Activated CD4-positive, alpha-beta memory T cell treated with anti-CD3 and anti-CD28 coated beads for 36 hours (primary cell): ENCODE measurements at regions of chr14 and their contacts with region 1.

Region 1: GRCh38 chr14:75293920-75294642 is 15.5 kb downstream of the FOS start:
- DNase-seq: peak; percentile 96
- H3K4me3 Mint-ChIP-seq: peak overlapping the region; percentile 79
- H3K27ac Mint-ChIP-seq: peak overlapping the region; percentile 67
- H3K4me1 Mint-ChIP-seq: peaks cover 20% of the 10 kb centered on the region
- H3K27me3 Mint-ChIP-seq: no peaks in the 10 kb centered on the region

Region 2: GRCh38 chr14:75002392-75003249 is 291.5 kb before region 1 on chr14 and contains the start of gene EIF2B2:
- CTCF ChIA-PET with region 1: no interaction called
- POLR2A ChIA-PET with region 1: no interaction called
- intact Hi-C with region 1: loop called (anchors 5 kb)
- DNase-seq: peak; percentile 100
- H3K4me3 Mint-ChIP-seq: peak within 1 kb of the TSS; percentile 98
- H3K27ac Mint-ChIP-seq: peak within 1 kb of the TSS; percentile 79
- H3K4me1 Mint-ChIP-seq: peaks cover 34% of the 10 kb centered on the region
- H3K27me3 Mint-ChIP-seq: no peaks in the 10 kb centered on the region
- total RNA-seq, gene EIF2B2: 61.9 to 62.6 TPM

Region 3: DNA sequence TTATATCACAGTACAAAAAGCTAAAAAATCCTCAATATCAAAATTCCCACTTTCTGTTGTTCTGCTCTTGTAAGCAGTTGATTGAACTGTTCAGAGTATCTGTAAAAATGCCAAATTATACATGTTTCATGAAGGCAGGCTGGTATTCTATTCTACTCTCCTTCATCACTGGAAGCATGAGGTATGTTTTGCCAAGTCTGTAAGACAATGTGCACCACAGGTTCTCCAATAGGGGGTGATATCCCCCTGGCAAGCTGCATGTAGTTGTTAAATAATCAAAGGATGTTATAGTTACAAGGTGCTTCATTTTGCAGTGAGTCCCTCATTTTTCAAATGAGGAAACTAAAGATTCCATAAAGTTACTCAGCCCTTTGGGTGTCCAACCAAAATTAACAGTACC is 152.1 kb before region 1 on chr14:
- CTCF ChIA-PET with region 1: interaction called, 118 read pairs
- POLR2A ChIA-PET with region 1: interaction called, 3 read pairs
- intact Hi-C with region 1: no loop called
- DNase-seq: no peak
- H3K4me3 Mint-ChIP-seq: no peak overlapping the region
- H3K27ac Mint-ChIP-seq: no peak overlapping the region
- H3K4me1 Mint-ChIP-seq: peaks cover 58% of the 10 kb centered on the region
- H3K27me3 Mint-ChIP-seq: no peaks in the 10 kb centered on the region

Region 4: DNA sequence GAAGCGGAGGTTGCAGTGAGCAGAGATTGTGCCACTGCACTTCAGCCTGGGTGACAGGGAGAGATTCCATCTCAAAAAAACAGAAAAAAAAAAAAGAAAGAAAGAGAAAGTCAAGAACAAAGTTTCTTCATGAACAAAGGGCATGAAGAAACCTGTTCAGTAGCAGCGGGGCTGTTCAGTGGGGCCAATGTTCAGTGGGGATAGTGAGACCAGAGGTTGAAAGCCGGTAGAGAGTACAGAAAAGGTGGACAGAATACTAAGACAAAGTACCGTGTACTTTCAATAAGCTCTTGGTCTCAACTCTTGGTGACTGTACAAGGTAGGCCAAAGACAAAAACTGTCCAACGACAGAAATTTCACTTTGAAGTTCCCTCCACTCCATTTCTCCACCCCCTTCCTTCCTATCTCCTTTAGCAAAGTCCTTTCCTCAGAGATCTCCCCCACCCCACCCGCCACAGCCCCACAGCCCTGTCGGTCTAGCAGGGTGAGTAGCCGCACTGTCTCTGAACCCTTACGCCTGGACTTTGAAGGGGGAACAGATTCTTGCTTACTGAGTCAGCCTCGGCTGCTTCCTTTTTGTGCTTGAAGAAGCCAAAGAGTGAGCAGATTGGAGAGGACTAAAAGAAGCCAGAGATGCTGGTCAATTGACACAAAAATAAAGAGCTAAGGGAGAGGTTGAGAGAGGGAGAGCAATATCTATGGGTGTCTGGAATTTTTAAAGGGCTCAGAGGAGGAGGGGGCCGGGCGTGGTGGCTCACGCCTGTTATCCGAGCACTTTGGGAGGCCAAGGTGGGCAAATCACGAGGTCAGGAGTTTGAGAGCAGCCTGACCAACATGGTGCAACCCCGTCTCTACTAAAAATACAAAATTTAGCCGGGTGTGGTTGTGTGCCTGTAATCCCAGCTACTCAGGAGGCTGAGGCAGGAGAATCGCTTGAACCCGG is 59.6 kb before region 1 on chr14:
- CTCF ChIA-PET with region 1: no interaction called
- POLR2A ChIA-PET with region 1: no interaction called
- intact Hi-C with region 1: no loop called
- DNase-seq: no peak
- H3K4me3 Mint-ChIP-seq: no peak overlapping the region
- H3K27ac Mint-ChIP-seq: no peak overlapping the region
- H3K4me1 Mint-ChIP-seq: peaks cover 29% of the 10 kb centered on the region
- H3K27me3 Mint-ChIP-seq: no peaks in the 10 kb centered on the region

Region 5: GRCh38 chr14:75249251-75249957 is 44.7 kb before region 1 on chr14:
- CTCF ChIA-PET with region 1: interaction called, 31 read pairs
- POLR2A ChIA-PET with region 1: no interaction called
- intact Hi-C with region 1: loop called (anchors 1 kb)
- DNase-seq: peak; percentile 93
- H3K4me3 Mint-ChIP-seq: peak overlapping the region; percentile 33
- H3K27ac Mint-ChIP-seq: peak overlapping the region; percentile 64
- H3K4me1 Mint-ChIP-seq: peaks cover 55% of the 10 kb centered on the region
- H3K27me3 Mint-ChIP-seq: peaks cover 4% of the 10 kb centered on the region

Region 6: DNA sequence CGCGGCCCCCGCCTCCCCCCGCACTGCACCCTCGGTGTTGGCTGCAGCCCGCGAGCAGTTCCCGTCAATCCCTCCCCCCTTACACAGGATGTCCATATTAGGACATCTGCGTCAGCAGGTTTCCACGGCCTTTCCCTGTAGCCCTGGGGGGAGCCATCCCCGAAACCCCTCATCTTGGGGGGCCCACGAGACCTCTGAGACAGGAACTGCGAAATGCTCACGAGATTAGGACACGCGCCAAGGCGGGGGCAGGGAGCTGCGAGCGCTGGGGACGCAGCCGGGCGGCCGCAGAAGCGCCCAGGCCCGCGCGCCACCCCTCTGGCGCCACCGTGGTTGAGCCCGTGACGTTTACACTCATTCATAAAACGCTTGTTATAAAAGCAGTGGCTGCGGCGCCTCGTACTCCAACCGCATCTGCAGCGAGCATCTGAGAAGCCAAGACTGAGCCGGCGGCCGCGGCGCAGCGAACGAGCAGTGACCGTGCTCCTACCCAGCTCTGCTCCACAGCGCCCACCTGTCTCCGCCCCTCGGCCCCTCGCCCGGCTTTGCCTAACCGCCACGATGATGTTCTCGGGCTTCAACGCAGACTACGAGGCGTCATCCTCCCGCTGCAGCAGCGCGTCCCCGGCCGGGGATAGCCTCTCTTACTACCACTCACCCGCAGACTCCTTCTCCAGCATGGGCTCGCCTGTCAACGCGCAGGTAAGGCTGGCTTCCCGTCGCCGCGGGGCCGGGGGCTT is 15.5 kb before region 1 on chr14 and contains the start of gene FOS:
- CTCF ChIA-PET with region 1: interaction called, 10 read pairs
- POLR2A ChIA-PET with region 1: interaction called, 11 read pairs
- intact Hi-C with region 1: loop called (anchors 1 kb)
- DNase-seq: peak; percentile 92
- H3K4me3 Mint-ChIP-seq: peak within 1 kb of the TSS; percentile 92
- H3K27ac Mint-ChIP-seq: peak within 1 kb of the TSS; percentile 91
- H3K4me1 Mint-ChIP-seq: peaks cover 48% of the 10 kb centered on the region
- H3K27me3 Mint-ChIP-seq: peaks cover 11% of the 10 kb centered on the region
- total RNA-seq, gene FOS: 21.1 to 26.7 TPM